ENCODE measurements at regions of chr1 and their contacts with region 1.

Region 1: DNA sequence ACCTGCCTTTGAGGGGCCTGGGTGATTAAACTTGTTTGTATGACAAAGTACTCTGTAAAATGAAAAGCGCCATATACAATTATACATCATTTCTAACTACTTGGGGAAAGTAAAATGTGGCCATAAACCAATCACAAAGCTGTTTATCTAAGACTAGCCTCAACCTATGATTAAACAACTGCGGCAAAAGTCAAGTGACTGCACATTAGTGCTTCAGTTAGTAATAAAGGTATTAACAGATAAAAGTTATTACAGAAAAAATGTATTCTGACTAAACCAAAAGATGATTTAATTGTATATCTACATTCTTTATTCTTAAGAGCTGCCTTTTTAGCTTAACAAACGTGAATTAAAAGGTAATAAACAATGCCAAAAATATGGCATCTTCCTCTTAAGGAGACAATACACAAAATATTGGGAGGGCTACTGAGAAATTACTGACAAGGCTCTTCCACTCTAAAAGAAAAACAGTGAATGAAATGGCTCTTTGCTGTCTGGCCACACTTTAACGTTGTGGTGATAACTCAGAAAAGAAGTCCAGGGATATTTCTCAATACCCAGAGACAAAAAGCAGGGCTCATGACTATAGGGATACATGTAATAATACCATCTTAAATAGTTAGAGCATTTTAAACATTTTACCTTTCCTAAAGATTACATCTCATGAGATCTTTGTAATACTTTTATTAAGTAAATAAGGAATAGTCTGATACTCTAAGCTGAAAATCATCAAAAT is 8.6 kb downstream of the ARHGAP29 start:
- DNase-seq: no peak
- ATAC-seq: peak in 3 of 4 donors; percentile 32 to 67 (median 44)
- H3K4me3 ChIP-seq: no peak overlapping the region
- H3K27ac ChIP-seq: peak overlapping the region in 5 of 12 donors; percentile 10 to 48 (median 21)
- H3K4me1 ChIP-seq: peaks cover 0 to 96% (median 67%) of the 10 kb centered on the region in 12 donors
- H3K27me3 ChIP-seq: no peaks in the 10 kb centered on the region
- CTCF ChIP-seq: no peak
- POLR2A ChIP-seq: no peak

Region 2: GRCh38 chr1:94186946-94187345 is 41.9 kb before region 1 on chr1:
- intact Hi-C with region 1: loop called in 2 of 10 experiments (anchors 5 kb)
- DNase-seq: no peak
- ATAC-seq: peak in 2 of 4 donors; percentile 46 to 55
- H3K4me3 ChIP-seq: no peak overlapping the region
- H3K27ac ChIP-seq: no peak overlapping the region
- H3K4me1 ChIP-seq: peaks cover 0 to 41% (median 28%) of the 10 kb centered on the region in 12 donors
- H3K27me3 ChIP-seq: no peaks in the 10 kb centered on the region
- CTCF ChIP-seq: no peak
- POLR2A ChIP-seq: no peak

Region 3: DNA sequence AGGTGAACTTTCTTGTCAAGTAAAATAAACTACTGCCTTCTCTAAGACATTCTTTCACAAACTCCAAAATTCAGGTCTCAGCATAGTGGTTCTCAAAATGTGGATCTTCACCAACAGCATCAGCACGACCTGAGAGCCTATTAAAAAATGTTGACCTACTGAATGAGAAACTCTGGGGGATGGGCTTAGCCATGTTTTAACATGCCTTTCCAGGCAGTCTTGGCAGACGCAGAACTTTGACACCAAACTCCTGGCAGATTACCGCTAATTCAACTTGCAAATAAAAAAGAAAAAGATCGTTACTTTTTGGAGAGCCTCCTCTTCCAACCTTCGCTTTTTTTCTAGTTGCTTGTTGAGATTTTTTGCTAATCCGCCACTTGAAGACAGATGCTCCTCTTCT is 26.6 kb before region 1 on chr1:
- intact Hi-C with region 1: loop called in 1 of 10 experiments (anchors 5 kb)
- DNase-seq: no peak
- ATAC-seq: no peak
- H3K4me3 ChIP-seq: no peak overlapping the region
- H3K27ac ChIP-seq: no peak overlapping the region
- H3K4me1 ChIP-seq: peaks cover 0 to 16% (median 3%) of the 10 kb centered on the region in 12 donors
- H3K27me3 ChIP-seq: no peaks in the 10 kb centered on the region
- CTCF ChIP-seq: no peak
- POLR2A ChIP-seq: no peak

Region 4: GRCh38 chr1:94434365-94435045 is 205.7 kb after region 1 on chr1:
- intact Hi-C with region 1: no loop called
- DNase-seq: no peak
- ATAC-seq: no peak
- H3K4me3 ChIP-seq: no peak overlapping the region
- H3K27ac ChIP-seq: no peak overlapping the region
- H3K4me1 ChIP-seq: peaks cover 0 to 19% (median 0%) of the 10 kb centered on the region in 12 donors
- H3K27me3 ChIP-seq: no peaks in the 10 kb centered on the region
- CTCF ChIP-seq: no peak
- POLR2A ChIP-seq: no peak